Activated naive CD4-positive, alpha-beta T cell treated with anti-CD3 and anti-CD28 coated beads for 36 hours (primary cell): ENCODE measurements at regions of chr21 and their contacts with region 1.

Region 1: GRCh38 chr21:33127154-33127893 is 57.4 kb downstream of the OLIG1 start:
- DNase-seq: peak; percentile 84
- H3K4me3 Mint-ChIP-seq: peak overlapping the region; percentile 55
- H3K27ac Mint-ChIP-seq: no peak overlapping the region
- H3K4me1 Mint-ChIP-seq: peaks cover 4% of the 10 kb centered on the region
- H3K27me3 Mint-ChIP-seq: no peaks in the 10 kb centered on the region

Region 2: DNA sequence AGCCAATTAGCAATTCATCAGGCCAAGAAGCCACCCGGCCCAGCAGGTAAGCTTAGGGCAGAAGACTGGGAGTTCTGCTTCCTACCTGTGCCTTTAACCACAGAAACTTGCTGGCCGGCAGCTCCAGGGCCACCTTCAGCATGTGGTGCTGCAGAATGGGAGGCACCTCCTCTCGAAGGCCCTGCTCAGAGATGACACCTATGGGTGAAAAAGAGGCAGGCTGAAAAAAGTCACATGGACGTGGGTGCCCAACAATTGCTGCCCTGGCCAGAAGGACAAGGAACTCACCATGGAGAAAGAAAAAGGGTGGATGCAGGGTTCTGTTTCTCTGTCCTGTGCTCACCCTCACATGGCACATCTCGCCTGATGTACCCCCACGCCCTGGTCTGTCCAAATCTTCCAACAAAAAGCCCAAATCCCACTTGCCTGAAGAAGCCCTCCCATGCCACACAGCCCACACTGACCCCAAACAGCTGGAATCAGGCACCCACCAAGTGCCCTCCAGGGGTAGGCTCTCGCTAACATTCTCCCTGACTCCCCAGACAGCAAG is 767.5 kb before region 1 on chr21:
- CTCF ChIA-PET with region 1: no interaction called
- intact Hi-C with region 1: no loop called
- DNase-seq: no peak
- H3K4me3 Mint-ChIP-seq: no peak overlapping the region
- H3K27ac Mint-ChIP-seq: no peak overlapping the region
- H3K4me1 Mint-ChIP-seq: no peaks in the 10 kb centered on the region
- H3K27me3 Mint-ChIP-seq: no peaks in the 10 kb centered on the region

Region 3: DNA sequence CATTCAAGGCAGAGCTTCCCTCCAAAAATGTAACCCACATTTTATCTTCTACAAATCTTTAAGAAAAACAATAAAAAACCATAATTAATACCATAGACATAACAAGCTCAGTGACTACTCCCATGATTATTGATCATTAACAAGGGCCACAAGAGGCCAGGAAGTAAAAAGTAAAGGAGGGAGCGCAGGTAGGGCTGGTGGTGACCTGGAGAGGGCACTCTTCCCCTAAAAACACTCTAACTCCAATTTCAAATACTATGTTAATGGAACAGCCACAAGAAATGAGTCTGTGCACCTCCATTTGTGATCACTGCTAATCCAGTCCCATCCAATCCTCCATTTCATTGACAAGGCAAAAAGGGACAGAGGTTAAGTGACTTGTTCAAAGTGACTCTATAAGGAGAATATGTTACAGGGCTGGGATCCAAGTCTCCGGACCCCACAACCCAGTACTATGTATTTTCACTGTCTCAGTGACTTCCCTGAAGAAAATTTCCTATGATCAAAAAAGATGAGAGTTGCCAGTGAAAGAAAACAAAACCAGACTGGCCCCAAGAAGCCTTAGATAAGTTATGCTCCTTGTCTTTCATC is 473.9 kb before region 1 on chr21:
- CTCF ChIA-PET with region 1: no interaction called
- intact Hi-C with region 1: loop called (anchors 1 kb)
- DNase-seq: peak; percentile 50
- H3K4me3 Mint-ChIP-seq: no peak overlapping the region
- H3K27ac Mint-ChIP-seq: no peak overlapping the region
- H3K4me1 Mint-ChIP-seq: peaks cover 3% of the 10 kb centered on the region
- H3K27me3 Mint-ChIP-seq: no peaks in the 10 kb centered on the region

Region 4: DNA sequence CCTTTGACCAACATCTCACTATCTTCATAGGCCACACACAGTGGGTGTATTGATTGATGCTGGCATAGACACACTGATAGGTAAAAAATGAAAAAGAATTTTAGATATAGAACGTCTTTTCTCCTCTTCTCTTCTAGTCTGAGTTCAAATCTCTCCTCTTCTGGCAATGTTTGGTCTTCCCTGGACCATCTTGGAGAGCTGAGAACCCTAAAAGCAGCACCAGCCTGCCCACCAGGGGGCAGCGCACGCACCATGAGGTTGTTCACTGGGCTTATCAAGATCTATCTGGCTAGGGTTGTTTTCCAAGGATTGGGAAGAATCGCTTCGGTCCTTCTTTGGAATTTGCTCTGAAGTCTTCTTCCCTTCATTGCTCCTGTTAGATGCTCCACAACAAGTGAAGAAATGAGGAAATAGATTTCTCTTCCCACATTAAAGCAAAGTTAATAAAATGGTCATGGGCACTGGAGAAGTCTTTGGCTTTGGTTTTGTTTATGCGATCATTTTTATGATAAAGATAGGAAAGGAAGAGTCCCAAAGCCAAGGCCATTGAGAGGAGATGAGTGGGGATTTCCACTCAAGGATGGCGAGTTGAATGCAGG is 205.6 kb before region 1 on chr21:
- CTCF ChIA-PET with region 1: interaction called, 6 read pairs
- intact Hi-C with region 1: loop called (anchors 1 kb)
- DNase-seq: peak; percentile 59
- H3K4me3 Mint-ChIP-seq: no peak overlapping the region
- H3K27ac Mint-ChIP-seq: no peak overlapping the region
- H3K4me1 Mint-ChIP-seq: peaks cover 2% of the 10 kb centered on the region
- H3K27me3 Mint-ChIP-seq: no peaks in the 10 kb centered on the region

Region 5: GRCh38 chr21:32994305-32994704 is 133.0 kb before region 1 on chr21:
- CTCF ChIA-PET with region 1: interaction called, 16 read pairs
- intact Hi-C with region 1: loop called (anchors 1 kb)
- DNase-seq: no peak
- H3K4me3 Mint-ChIP-seq: no peak overlapping the region
- H3K27ac Mint-ChIP-seq: no peak overlapping the region
- H3K4me1 Mint-ChIP-seq: no peaks in the 10 kb centered on the region
- H3K27me3 Mint-ChIP-seq: peaks cover 6% of the 10 kb centered on the region

Region 6: DNA sequence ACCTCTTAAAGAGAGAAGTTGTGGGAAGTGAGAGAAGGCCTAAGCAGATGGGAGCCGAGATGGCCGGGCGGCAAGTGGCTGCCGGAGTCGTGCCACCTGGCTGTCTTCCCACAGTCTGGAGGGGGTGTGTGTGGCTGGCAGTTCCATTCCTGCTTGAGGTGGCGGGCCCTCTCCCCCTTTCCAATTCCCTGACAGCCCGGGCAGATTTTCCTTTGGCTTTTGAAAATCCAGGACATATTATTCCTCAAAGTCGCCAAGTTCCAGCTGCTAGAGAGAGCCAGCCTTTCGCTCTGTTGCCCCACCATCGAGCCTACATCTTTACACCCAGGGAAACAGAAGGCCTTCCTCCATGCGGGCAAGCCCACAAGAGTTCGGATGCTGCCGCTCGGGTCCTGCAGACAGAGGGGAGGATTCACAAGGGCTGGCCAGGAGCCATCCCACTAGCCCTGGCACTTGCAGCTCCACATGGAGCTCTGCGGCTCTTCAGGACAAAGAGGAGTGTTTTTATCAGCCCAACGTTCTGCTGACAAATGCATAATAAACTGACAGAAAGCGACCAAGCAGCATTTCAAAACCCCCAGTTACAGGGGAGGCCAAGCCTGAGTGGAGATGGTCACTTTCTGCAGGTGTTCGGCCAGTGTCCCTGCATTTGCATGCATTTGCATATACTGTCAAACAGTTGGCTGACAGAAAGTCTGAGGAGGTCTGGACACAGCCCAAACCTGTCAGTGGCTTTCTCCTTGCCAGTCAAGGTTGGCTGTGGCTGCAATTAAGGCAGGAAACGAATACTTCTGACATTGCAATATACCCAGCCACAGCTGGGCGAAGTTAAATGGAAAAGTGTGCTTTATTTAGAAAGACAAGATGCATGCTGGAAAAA is 11.5 kb before region 1 on chr21:
- CTCF ChIA-PET with region 1: interaction called, 18 read pairs
- intact Hi-C with region 1: no loop called
- DNase-seq: no peak
- H3K4me3 Mint-ChIP-seq: no peak overlapping the region
- H3K27ac Mint-ChIP-seq: no peak overlapping the region
- H3K4me1 Mint-ChIP-seq: peaks cover 20% of the 10 kb centered on the region
- H3K27me3 Mint-ChIP-seq: no peaks in the 10 kb centered on the region

Region 7: GRCh38 chr21:33461538-33462250 is 334.4 kb after region 1 on chr21:
- CTCF ChIA-PET with region 1: no interaction called
- intact Hi-C with region 1: no loop called
- DNase-seq: no peak
- H3K4me3 Mint-ChIP-seq: no peak overlapping the region
- H3K27ac Mint-ChIP-seq: no peak overlapping the region
- H3K4me1 Mint-ChIP-seq: peaks cover 3% of the 10 kb centered on the region
- H3K27me3 Mint-ChIP-seq: no peaks in the 10 kb centered on the region

Region 8: GRCh38 chr21:33854604-33855003 is 727.3 kb after region 1 on chr21:
- CTCF ChIA-PET with region 1: no interaction called
- intact Hi-C with region 1: no loop called
- DNase-seq: no peak
- H3K4me3 Mint-ChIP-seq: no peak overlapping the region
- H3K27ac Mint-ChIP-seq: no peak overlapping the region
- H3K4me1 Mint-ChIP-seq: no peaks in the 10 kb centered on the region
- H3K27me3 Mint-ChIP-seq: no peaks in the 10 kb centered on the region